ENCODE measurements at regions of chr5 and their contacts with region 1.

Region 1: GRCh38 chr5:135993880-135994636 is 34.7 kb upstream of the TGFBI start:
- DNase-seq: peak; percentile 84
- H3K4me3 ChIP-seq: 0 out of 2 replicates have a peak overlapping the region, but pooled peaks have one; percentile 7
- H3K27ac ChIP-seq: peak overlapping the region; percentile 97
- H3K27me3 ChIP-seq: no peaks in the 10 kb centered on the region
- CTCF ChIP-seq: no peak

Region 2: GRCh38 chr5:136006761-136007251 is 12.7 kb after region 1 on chr5:
- CTCF ChIA-PET with region 1: interaction called, 3 read pairs
- POLR2A ChIA-PET with region 1: interaction called, 27 read pairs
- DNase-seq: no peak
- H3K4me3 ChIP-seq: no peak overlapping the region
- H3K27ac ChIP-seq: peak overlapping the region; percentile 79
- H3K27me3 ChIP-seq: no peaks in the 10 kb centered on the region
- CTCF ChIP-seq: no peak

Region 3: GRCh38 chr5:136028782-136029742 is 35.0 kb after region 1 on chr5 and contains the start of gene TGFBI:
- CTCF ChIA-PET with region 1: no interaction called
- POLR2A ChIA-PET with region 1: interaction called, 13 read pairs
- DNase-seq: peak; percentile 30
- H3K4me3 ChIP-seq: peak within 1 kb of the TSS; percentile 93
- H3K27ac ChIP-seq: peak within 1 kb of the TSS; percentile 65
- H3K27me3 ChIP-seq: no peaks in the 10 kb centered on the region
- CTCF ChIP-seq: peak; percentile 25; the same call in 1 of the 2 replicates
- polyA plus RNA-seq, gene TGFBI: 2,219 and 2,576 TPM in 2 replicates

Measured in AG04450 (cell line).